Mucosa of descending colon (tissue), 3 donors: ENCODE measurements at regions of chr12 and their contacts with region 1.

Region 1: DNA sequence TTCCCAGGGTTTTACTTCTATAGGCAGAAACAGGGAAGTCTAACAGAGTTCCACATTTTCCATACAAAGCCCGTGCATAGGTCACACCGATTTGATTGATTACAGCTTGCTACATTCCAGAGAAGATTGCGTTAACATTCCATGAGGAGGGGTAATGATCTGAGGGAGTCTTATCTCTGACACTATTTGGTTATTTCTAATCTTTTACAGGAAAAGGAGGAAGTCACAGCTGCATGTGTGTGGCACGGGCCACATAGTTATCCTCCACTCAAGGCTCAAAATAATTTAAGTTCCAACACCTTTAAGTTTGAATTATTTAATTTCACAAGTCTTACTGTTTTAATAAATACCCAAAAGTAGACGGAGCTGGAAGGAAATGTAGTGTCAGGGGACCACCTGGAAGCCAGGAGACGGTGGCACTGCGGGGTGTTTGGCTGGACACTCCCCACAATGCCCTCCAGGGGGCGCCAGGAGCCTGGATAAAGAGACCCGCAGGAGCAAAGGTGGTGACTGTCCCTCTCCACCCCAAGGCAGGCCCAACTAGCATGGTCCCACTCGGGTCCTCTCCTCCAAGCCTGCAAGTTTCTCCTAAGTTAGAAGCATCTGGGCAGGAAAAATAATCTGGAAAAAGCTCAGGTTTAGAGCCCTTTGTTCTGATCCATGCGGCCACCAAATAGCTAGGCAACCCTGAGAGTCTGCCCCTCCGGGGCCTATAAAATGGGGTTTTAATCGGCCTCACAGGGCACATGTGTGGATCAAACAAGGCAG is 20.2 kb downstream of the KRT8 start:
- DNase-seq: peak; percentile 84 to 90 (median 89)
- ATAC-seq: peak; percentile 87
- H3K4me3 ChIP-seq: no peak overlapping the region
- H3K4me1 ChIP-seq: peaks cover 1% of the 10 kb centered on the region
- CTCF ChIP-seq: peak; percentile 81

Region 2: GRCh38 chr12:52268212-52268611 is 616.5 kb before region 1 on chr12:
- intact Hi-C with region 1: no loop called
- DNase-seq: no peak
- ATAC-seq: no peak
- H3K4me3 ChIP-seq: no peak overlapping the region
- H3K4me1 ChIP-seq: no peaks in the 10 kb centered on the region
- CTCF ChIP-seq: no peak

Region 3: GRCh38 chr12:52590021-52590420 is 294.7 kb before region 1 on chr12:
- intact Hi-C with region 1: no loop called
- DNase-seq: no peak
- ATAC-seq: no peak
- H3K4me3 ChIP-seq: no peak overlapping the region
- H3K4me1 ChIP-seq: no peaks in the 10 kb centered on the region
- CTCF ChIP-seq: no peak

Region 4: DNA sequence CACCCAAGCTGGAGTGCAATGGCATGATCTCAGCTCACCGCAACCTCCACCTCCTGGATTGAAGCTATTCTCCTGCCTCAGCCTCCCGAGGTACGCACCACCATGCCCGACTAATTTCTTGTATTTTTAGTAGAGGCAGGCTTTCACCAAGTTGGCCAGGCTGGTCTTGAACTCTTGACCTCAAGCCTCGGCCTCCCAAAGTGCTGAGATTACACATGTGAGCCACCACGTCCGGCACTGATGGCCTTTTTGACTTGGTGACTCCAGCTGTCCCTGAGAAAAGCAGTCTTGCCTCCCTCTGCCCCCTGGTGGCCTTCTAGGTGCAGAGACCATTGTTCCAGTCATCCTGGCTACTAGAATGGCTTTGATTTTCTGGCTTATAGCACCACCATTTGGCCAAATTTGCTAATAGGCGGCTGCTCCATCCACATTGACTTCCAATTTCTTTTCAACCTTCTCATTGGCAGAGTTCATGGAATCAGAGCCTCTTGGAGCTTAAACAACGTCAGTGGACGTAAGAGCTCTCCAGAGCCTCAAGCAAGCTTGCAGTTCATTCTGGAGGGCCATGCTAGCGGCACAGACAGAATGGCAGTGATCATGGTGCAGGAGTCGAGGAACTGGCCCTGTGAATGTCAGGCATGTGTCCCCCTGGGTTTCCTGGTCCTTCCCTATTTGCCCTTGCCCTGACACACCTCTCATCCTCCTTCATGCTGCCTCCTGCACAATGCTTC is 96.1 kb after region 1 on chr12:
- intact Hi-C with region 1: loop called (anchors 2 to 5 kb)
- DNase-seq: peak; percentile 80 to 97 (median 87)
- ATAC-seq: peak; percentile 96
- H3K4me3 ChIP-seq: no peak overlapping the region
- H3K4me1 ChIP-seq: peaks cover 3% of the 10 kb centered on the region
- CTCF ChIP-seq: peak; percentile 78